IMR-90 (cell line): ENCODE measurements at regions of chr2 and their contacts with region 1.

Region 1: GRCh38 chr2:62660582-62661262 is 44.8 kb upstream of the EHBP1 start:
- DNase-seq: peak; percentile 89
- ATAC-seq: peak; percentile 27
- H3K4me3 ChIP-seq: no peak overlapping the region
- H3K27ac ChIP-seq: peak overlapping the region; percentile 49; the same call in 1 of the 2 replicates
- H3K4me1 ChIP-seq: peaks cover 16% of the 10 kb centered on the region
- H3K27me3 ChIP-seq: no peaks in the 10 kb centered on the region
- CTCF ChIP-seq: no peak
- POLR2A ChIP-seq: no peak
- RAD21 ChIP-seq: no peak

Region 2: DNA sequence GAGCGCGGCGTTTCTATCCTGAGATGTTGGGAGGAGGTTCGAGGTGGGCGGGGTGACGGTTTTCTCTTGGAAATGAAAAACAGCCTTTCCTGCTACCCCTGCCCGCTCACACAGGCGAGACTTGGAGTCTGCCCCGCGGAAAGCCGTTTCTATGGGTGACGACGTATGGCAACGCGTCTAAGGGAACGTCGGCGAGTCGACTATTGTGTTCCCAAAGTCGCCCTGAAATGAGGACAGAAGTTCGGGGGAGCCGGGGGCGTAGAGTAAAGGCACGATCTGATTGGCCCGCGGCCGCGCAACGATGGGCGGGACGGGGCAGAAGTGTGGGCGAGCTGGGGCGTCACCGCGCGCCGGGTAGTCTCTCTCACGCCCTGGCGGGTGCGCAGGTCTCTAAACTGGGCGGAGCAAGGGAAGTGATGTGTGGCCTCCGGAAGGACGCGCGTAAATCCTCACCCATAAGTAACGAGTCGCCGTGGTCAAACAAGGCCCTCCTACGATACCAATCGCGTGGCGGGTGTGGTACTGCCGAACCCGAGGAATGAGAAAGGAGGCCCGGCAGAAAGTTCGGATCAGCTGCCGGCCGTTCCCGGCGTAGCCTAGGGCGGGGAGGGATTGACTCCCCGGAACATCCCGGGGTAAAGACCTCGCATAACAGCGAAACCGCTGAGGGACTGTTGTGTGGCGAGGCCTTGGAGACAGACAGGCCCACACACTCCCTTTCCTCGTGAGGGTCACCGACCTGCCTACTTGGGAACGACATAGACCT is 896.5 kb before region 1 on chr2:
- CTCF ChIA-PET with region 1: no interaction called
- POLR2A ChIA-PET with region 1: no interaction called
- dilution Hi-C with region 1: no loop called
- in situ Hi-C with region 1: no loop called
- intact Hi-C with region 1: no loop called
- DNase-seq: peak; percentile 99
- ATAC-seq: peak; percentile 99
- H3K4me3 ChIP-seq: peak overlapping the region; percentile 50
- H3K27ac ChIP-seq: peak overlapping the region; percentile 90
- H3K4me1 ChIP-seq: 0 out of 2 replicates have a peak, but pooled peaks cover 2% of the 10 kb centered on the region
- H3K27me3 ChIP-seq: no peaks in the 10 kb centered on the region
- CTCF ChIP-seq: no peak
- POLR2A ChIP-seq: peak; percentile 98
- RAD21 ChIP-seq: no peak

Region 3: GRCh38 chr2:62505750-62506420 is 154.8 kb before region 1 on chr2 and contains the start of gene TMEM17:
- CTCF ChIA-PET with region 1: no interaction called
- POLR2A ChIA-PET with region 1: interaction called, 3 read pairs
- dilution Hi-C with region 1: no loop called
- in situ Hi-C with region 1: no loop called
- intact Hi-C with region 1: loop called (anchors 1 kb)
- DNase-seq: peak; percentile 89
- ATAC-seq: peak; percentile 91
- H3K4me3 ChIP-seq: peak within 1 kb of the TSS; percentile 54
- H3K27ac ChIP-seq: peak within 1 kb of the TSS; percentile 78
- H3K4me1 ChIP-seq: no peaks in the 10 kb centered on the region; the same call in 1 of the 2 replicates
- H3K27me3 ChIP-seq: no peaks in the 10 kb centered on the region
- CTCF ChIP-seq: no peak
- POLR2A ChIP-seq: 0 out of 2 replicates have a peak, but pooled peaks have one; percentile 24
- RAD21 ChIP-seq: no peak
- total RNA-seq, gene TMEM17: 1.3 and 2.2 TPM in 2 replicates

Region 4: DNA sequence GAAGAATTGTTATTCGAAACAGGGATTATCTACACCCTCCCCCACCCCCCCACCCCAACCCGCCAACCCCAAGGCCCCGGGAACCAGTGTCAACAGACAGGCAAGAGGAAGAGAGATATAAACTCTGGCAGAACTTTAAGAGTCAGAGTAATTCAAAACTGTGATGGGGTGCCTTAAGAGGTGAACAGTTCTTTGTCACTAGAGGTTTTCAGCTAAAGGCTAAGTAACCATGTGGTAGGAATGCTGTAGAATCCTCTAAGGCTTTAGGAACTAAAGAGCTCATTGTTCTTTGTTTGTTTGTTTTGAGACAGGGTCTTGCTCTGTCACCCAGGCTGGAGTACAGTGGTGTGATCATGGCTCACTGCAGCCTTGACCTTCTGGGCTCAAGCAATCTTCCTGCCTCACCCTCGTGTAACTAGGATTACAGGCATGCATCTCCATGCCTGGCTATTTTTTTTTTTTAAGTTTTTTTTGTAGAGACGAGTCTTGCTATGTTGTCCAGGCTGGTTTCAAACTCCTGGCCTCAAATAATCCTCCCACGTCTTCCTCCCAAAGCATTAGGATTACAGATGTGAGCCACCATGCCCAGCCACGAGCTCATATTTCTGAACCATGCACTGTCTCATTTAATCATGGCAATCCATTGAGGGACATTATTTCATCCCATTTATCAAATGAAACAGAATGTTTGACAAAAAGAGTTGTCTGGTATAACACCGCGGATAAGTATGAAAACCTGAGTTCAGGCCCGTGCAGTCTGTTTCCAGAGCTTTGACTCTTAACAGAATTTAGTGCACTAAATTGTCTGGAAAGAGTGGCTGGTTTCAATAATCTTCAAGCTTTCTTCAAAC is 134.0 kb before region 1 on chr2:
- CTCF ChIA-PET with region 1: no interaction called
- POLR2A ChIA-PET with region 1: interaction called, 12 read pairs
- dilution Hi-C with region 1: no loop called
- in situ Hi-C with region 1: no loop called
- intact Hi-C with region 1: no loop called
- DNase-seq: no peak
- ATAC-seq: no peak
- H3K4me3 ChIP-seq: no peak overlapping the region
- H3K27ac ChIP-seq: no peak overlapping the region
- H3K4me1 ChIP-seq: peaks cover 3% of the 10 kb centered on the region; the same call in 1 of the 2 replicates
- H3K27me3 ChIP-seq: no peaks in the 10 kb centered on the region
- CTCF ChIP-seq: no peak
- POLR2A ChIP-seq: no peak
- RAD21 ChIP-seq: no peak

Region 5: GRCh38 chr2:62577994-62578781 is 82.5 kb before region 1 on chr2:
- CTCF ChIA-PET with region 1: interaction called, 4 read pairs
- POLR2A ChIA-PET with region 1: no interaction called
- dilution Hi-C with region 1: no loop called
- in situ Hi-C with region 1: no loop called
- intact Hi-C with region 1: loop called (anchors 5 kb)
- DNase-seq: peak; percentile 92
- ATAC-seq: peak; percentile 51
- H3K4me3 ChIP-seq: no peak overlapping the region
- H3K27ac ChIP-seq: peak overlapping the region; percentile 90
- H3K4me1 ChIP-seq: peaks cover 22% of the 10 kb centered on the region
- H3K27me3 ChIP-seq: no peaks in the 10 kb centered on the region
- CTCF ChIP-seq: no peak
- POLR2A ChIP-seq: no peak
- RAD21 ChIP-seq: no peak

Region 6: DNA sequence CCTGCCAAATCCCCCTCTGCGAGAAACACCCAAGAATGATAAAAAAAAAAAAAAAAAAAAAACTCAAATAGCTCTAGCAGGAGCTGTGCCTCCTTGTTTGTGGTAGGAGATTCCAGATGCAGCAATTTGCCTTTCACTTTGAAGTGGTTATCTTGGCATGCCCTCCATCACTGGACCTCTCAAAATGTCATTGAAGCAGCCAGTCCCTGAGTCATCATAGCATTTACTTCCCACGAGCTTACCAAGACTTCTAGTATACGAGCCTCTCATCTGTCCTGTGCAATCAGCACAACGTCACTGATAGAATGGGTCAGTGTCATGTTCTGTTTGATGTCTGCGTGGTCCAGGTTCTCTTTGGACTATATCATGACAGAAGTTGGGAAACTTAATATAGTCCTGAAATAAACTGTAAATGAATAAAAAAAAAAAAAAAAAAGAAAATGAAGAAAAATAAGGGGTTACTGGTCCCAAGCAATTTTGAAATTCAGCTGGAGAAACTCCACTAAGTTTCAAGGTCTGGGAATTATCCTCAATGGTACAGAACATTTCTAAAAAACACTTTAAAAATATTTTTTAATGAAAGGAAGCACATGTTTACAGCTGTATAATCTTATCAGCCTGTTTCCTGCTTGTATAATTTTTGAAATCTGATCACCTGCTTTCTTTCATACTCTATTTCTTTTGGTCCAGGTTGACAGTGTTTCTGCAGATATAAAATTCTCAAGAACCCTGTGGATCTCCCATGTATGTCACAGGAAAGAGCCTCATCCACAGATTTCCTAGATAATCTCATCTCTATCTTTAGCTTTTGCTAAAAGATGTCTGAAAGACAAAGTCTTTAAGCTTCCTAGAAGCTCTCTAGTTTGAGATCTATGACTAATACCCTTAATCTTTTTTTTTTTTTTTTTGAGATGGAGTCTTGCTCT is 29.3 kb before region 1 on chr2:
- CTCF ChIA-PET with region 1: no interaction called
- POLR2A ChIA-PET with region 1: no interaction called
- dilution Hi-C with region 1: no loop called
- in situ Hi-C with region 1: no loop called
- intact Hi-C with region 1: no loop called
- DNase-seq: no peak
- ATAC-seq: no peak
- H3K4me3 ChIP-seq: no peak overlapping the region
- H3K27ac ChIP-seq: no peak overlapping the region
- H3K4me1 ChIP-seq: no peaks in the 10 kb centered on the region
- H3K27me3 ChIP-seq: no peaks in the 10 kb centered on the region
- CTCF ChIP-seq: no peak
- POLR2A ChIP-seq: no peak
- RAD21 ChIP-seq: no peak

Region 7: DNA sequence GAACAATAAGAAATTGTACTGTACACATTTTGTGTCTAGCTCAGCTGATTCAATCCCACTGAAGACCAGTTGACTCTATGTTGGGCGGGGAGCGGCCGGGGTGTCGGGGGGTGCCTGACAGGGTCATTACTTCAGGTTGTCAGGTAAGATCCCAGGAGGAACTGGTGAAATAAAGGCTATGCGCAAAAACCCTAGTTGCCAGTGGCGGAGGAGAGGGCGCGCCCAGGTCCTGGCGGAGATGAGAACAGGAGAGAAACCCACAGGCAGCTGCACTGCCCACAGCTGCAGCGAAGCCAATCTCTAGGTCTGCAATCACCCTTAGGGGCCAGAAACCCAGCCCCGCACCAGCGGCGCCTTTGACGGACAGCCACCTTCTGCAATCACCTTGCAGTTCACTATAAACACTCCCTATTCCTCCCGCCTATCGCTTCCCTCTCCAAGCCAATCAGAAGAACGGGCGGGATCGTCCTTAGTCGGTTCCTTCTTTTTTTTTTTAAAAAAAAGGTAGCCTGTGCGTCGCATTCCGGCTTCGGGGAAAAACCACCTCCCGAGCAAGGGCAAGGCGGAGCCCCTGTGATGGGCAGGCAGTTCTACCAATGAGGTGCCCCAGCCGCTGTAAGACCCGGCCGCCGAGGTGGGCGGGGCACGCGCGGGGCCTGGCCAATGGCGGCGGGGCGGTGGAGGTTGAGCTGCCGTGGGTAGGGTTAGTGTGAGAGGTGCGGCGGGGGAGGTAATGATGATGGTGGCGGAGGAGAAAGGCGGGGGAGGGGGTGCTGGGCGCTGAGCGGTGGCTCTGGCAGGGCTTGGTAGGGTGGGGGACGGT is 44.5 kb after region 1 on chr2 and contains the start of gene EHBP1:
- CTCF ChIA-PET with region 1: no interaction called
- POLR2A ChIA-PET with region 1: interaction called, 10 read pairs
- dilution Hi-C with region 1: no loop called
- in situ Hi-C with region 1: loop called (anchors 5 kb)
- intact Hi-C with region 1: loop called (anchors 1 kb)
- DNase-seq: peak; percentile 100
- ATAC-seq: peak; percentile 96
- H3K4me3 ChIP-seq: peak within 1 kb of the TSS; percentile 83
- H3K27ac ChIP-seq: peak within 1 kb of the TSS; percentile 84
- H3K4me1 ChIP-seq: peaks cover 4% of the 10 kb centered on the region; the same call in 1 of the 2 replicates
- H3K27me3 ChIP-seq: no peaks in the 10 kb centered on the region
- CTCF ChIP-seq: no peak
- POLR2A ChIP-seq: 0 out of 2 replicates have a peak, but pooled peaks have one; percentile 37
- RAD21 ChIP-seq: no peak; the same call in 1 of the 2 replicates
- total RNA-seq, gene EHBP1: 44.4 and 55.0 TPM in 2 replicates